ENCODE measurements at regions of chr9 and their contacts with region 1.

Region 1: GRCh38 chr9:128191406-128192046 is at the start of gene CIZ1:
- DNase-seq: peak; percentile 84 to 90
- ATAC-seq: peak; percentile 84 to 91 (median 88)
- H3K4me3 ChIP-seq: peak within 1 kb of the TSS; percentile 89
- H3K27ac ChIP-seq: peak within 1 kb of the TSS; percentile 90
- H3K4me1 ChIP-seq: peaks cover 16% of the 10 kb centered on the region
- H3K27me3 ChIP-seq: no peaks in the 10 kb centered on the region
- CTCF ChIP-seq: peak; percentile 74
- total RNA-seq, gene CIZ1: 86.0 to 119 (median 109) TPM

Region 2: DNA sequence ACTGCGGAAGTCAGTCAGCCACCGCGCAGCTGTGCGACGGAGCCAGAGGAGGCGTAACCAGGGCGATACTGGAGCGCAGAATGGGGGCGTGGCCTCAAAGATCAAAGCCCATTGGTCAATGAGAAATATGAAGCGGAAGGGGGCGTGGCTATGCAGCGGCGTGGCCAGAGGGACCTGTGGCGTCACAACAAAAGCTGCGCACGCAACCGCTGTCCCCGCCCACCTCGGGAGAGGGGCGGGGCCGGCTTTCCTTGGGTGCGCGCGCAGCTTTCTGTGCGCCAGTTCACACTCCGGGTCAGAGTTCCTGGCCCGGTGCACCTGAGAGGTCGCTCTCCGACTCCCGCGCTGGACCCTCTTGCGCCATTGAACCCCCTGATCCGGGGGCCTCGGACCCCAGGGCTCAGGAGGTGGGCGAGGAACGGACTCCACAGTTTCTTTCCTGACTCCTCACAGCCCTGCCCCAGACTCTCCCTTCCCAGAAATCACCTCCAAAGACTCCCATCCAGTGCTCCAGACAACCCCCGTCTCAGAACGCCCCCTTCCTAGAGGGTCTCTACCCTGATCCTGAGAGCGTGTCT is 84.6 kb after region 1 on chr9 and contains the starts of genes GOLGA2 and SWI5:
- intact Hi-C with region 1: loop called in 1 of 2 experiments (anchors 5 kb)
- DNase-seq: peak; percentile 100
- ATAC-seq: peak; percentile 97 to 99 (median 98)
- H3K4me3 ChIP-seq: peak within 1 kb of the TSS; percentile 97
- H3K27ac ChIP-seq: peak within 1 kb of the TSS; percentile 86
- H3K4me1 ChIP-seq: peaks cover 19% of the 10 kb centered on the region
- H3K27me3 ChIP-seq: no peaks in the 10 kb centered on the region
- CTCF ChIP-seq: no peak
- total RNA-seq, gene GOLGA2: 63.5 to 85.3 (median 76.7) TPM
- total RNA-seq, gene SWI5: 10.0 to 24.7 (median 13.0) TPM

Region 3: DNA sequence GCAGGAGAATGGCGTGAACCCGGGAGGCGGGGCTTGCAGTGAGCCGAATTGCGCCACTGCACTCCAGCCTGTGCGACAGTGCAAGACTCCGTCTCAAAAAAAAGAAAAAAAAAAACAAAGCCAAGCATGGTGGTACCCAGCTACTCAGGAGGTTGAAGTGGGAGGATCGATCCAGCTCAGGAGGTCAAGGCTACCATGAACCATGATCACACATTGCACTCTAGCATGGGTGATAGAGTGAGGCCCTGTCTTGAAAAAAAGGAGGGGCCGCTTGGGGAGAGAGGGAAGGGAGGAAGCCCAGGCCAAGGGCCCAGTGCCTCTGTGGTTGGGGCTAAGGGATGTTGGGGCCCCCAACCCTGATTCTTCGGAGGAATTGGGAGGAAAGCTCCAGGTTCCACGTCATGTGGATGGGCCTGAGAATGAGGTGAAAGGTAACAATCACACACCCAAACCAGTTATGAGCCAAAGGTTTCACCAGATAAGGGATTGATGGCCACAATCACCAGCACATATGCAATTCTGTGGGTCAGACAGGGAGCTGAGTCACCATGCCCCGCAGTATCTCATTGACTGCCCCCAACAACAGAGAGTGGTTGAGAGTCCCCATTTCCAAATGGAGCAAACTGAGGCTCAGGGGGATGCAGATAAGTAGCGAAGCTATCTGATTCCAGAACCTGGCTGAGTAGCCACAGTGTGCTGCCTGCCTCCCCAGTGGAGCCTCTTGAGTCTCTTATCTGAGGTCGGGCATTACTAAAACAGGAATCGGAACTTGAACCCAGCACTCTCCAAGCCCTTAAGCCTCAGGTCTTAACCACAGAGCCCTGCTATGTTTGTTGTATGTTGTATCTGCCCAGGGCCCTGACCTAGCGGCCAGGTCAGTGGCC is 105.1 kb after region 1 on chr9:
- intact Hi-C with region 1: no loop called
- DNase-seq: no peak
- ATAC-seq: no peak
- H3K4me3 ChIP-seq: no peak overlapping the region
- H3K27ac ChIP-seq: no peak overlapping the region
- H3K4me1 ChIP-seq: no peaks in the 10 kb centered on the region
- H3K27me3 ChIP-seq: no peaks in the 10 kb centered on the region
- CTCF ChIP-seq: no peak